ENCODE measurements at regions of chr14 and their contacts with region 1.

Region 1: DNA sequence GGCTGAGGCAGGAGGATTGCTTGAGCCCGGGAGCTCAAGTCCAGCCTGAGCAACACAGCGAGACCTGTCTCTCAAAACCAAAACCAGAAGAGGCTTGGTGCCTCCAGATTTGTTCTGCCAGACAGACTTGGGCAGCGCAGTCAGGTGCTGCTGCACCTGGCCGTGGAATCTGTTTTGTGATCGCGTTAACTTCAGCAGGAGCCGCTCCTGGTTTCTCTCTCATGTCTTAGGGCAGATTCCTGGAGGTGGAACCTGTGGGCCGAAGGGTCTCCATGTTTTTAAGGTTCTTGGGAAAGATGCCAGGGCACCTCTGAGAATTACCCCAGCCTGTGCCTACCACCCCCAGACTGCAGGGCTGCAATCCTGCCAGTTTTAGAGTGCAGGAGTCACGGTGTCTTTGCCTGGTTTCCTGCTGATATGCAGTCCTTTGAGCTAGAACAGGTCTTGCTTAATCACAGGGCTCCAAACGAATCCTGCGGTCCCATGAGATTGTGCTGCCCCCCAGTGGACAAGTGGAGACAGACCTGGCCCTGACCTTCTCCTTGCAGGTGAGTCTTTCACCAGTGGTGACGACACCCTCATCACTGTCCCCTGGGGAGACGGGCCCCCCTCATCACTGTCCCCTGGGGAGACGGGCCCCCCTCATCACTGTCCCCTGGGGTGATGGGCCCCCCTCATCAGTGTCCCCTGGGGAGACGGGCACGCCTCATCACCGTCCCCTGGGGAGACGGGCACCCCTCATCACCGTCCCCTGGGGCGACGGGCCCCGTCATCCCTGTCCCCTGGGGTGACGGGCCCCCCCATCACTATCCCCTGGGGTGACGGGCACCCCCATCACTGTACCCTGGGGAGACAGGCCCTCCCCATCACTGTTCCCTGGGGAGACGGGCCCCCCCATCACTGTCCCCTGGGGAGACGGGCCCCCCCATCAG is 37.6 kb downstream of the PACS2 start:
- DNase-seq: peak; percentile 95
- H3K4me3 ChIP-seq: no peak overlapping the region
- H3K27ac ChIP-seq: no peak overlapping the region
- H3K4me1 ChIP-seq: peaks cover 5 to 26% (median 16%) of the 10 kb centered on the region in 4 donors
- H3K27me3 ChIP-seq: no peaks in the 10 kb centered on the region
- CTCF ChIP-seq: peak; percentile 70 to 89 (median 78)
- EP300 ChIP-seq: no peak
- POLR2A ChIP-seq: no peak

Region 2: GRCh38 chr14:105093431-105094192 is 258.6 kb before region 1 on chr14:
- intact Hi-C with region 1: loop called (anchors 2 kb)
- DNase-seq: no peak
- H3K4me3 ChIP-seq: peak overlapping the region; percentile 76 to 86 (median 83)
- H3K27ac ChIP-seq: peak overlapping the region; percentile 88 to 95 (median 92)
- H3K4me1 ChIP-seq: peaks cover 40 to 59% (median 53%) of the 10 kb centered on the region in 4 donors
- H3K27me3 ChIP-seq: no peaks in the 10 kb centered on the region
- CTCF ChIP-seq: peak; percentile 29 to 47 (median 32)
- EP300 ChIP-seq: no peak
- POLR2A ChIP-seq: no peak

Region 3: GRCh38 chr14:105203057-105203531 is 149.1 kb before region 1 on chr14:
- intact Hi-C with region 1: loop called (anchors 2 kb)
- DNase-seq: no peak
- H3K4me3 ChIP-seq: no peak overlapping the region
- H3K27ac ChIP-seq: no peak overlapping the region
- H3K4me1 ChIP-seq: peaks cover 65 to 83% (median 69%) of the 10 kb centered on the region in 4 donors
- H3K27me3 ChIP-seq: peaks cover 0 to 46% (median 18%) of the 10 kb centered on the region in 4 donors
- CTCF ChIP-seq: peak; percentile 84 to 94 (median 90)
- EP300 ChIP-seq: no peak
- POLR2A ChIP-seq: no peak

Region 4: GRCh38 chr14:105248368-105248756 is 103.8 kb before region 1 on chr14 and contains the start of gene BTBD6:
- intact Hi-C with region 1: loop called (anchors 10 kb)
- DNase-seq: peak; percentile 94
- H3K4me3 ChIP-seq: peak within 1 kb of the TSS; percentile 63 to 94 (median 66)
- H3K27ac ChIP-seq: peak within 1 kb of the TSS; percentile 86 to 96 (median 92)
- H3K4me1 ChIP-seq: peaks cover 18 to 35% (median 32%) of the 10 kb centered on the region in 4 donors
- H3K27me3 ChIP-seq: no peaks in the 10 kb centered on the region
- CTCF ChIP-seq: no peak
- EP300 ChIP-seq: no peak
- POLR2A ChIP-seq: no peak
- total RNA-seq, gene BTBD6: 56.1 to 72.5 (median 69.4) TPM

Region 5: DNA sequence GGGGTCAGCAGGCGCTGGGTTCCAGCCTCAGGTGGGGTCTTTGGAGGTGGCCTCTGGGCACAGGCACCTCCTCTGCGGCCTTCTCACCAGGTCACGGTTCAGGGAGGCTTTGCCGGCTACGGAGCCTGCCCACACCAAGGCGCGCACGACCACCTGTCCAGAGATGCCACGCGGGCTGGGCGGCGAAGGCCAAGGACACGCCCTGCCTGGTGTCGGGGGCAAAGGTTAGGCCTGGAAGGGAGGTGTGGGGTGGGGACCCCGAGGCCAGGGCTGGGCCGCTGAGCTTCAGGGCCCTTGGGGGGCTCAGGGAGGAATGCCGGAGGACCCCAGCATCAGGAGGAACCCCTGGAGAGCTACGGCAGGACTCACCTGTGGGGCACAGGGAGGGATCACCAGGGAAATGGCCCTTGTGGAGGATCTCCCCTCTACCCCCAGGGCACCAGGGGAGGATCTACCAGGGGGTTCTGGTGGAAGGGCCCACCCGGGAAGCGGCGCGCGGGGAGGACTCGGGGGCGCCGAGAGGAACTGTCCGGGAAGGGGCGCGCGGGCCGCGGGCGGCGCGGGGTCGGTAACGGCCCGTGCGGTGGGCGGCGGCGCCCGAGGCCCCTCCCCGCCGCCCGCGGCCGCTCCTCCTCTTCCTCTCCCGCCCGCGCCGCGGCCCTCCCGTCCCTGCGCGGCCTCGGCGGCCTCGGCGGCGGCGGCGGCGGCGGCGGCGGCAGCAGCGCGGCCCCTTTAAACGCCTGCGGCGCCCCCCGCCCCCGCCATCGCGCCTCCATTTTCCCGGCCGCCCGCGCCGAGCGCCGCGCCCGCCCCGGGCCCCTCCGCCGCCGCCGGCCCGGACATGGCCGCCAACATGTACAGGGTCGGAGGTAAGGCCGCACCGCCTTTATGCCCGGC is 67.3 kb after region 1 on chr14 and contains the start of gene MTA1:
- intact Hi-C with region 1: no loop called
- DNase-seq: no peak
- H3K4me3 ChIP-seq: peak within 1 kb of the TSS; percentile 70 to 88 (median 74)
- H3K27ac ChIP-seq: peak within 1 kb of the TSS; percentile 72 to 85 (median 80)
- H3K4me1 ChIP-seq: peaks cover 42 to 56% (median 52%) of the 10 kb centered on the region in 4 donors
- H3K27me3 ChIP-seq: no peaks in the 10 kb centered on the region
- CTCF ChIP-seq: no peak
- EP300 ChIP-seq: no peak
- POLR2A ChIP-seq: no peak
- total RNA-seq, gene MTA1: 49.0 to 94.2 (median 67.9) TPM

Region 6: DNA sequence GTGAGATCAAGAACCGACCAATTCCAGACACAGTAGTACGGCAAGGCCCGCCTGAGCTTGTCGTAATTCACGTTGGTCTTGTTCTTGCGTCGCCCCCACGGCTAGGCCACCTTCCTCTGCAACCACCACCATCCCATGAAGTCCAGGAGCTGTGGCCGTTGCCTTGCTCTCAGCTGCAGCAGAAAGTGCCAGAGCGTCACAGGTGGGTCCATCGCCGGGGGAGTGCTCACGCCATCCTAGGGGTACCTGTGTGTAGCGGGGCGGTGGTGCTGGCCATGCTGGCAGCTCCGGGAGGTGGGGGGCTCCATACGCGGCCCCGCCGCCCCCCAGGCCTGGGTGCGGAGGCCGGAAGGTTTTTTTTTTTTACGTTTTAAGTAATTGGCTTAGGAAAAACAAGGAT is 197.3 kb after region 1 on chr14:
- intact Hi-C with region 1: no loop called
- DNase-seq: no peak
- H3K4me3 ChIP-seq: no peak overlapping the region
- H3K27ac ChIP-seq: no peak overlapping the region
- H3K4me1 ChIP-seq: no peaks in the 10 kb centered on the region
- H3K27me3 ChIP-seq: peaks cover 0 to 5% (median 0%) of the 10 kb centered on the region in 4 donors
- CTCF ChIP-seq: no peak
- EP300 ChIP-seq: no peak
- POLR2A ChIP-seq: no peak